Dorsolateral prefrontal cortex (tissue), 120 donors: ENCODE measurements at regions of chr3 and their contacts with region 1.

Region 1: GRCh38 chr3:40580494-40581091 is 55.8 kb downstream of the ZNF621 start:
- DNase-seq: peak; percentile 52 to 82 (median 71)
- H3K4me3 ChIP-seq: no peak overlapping the region
- H3K27ac ChIP-seq: peak overlapping the region in 43 of 59 donors; percentile 10 to 84 (median 62)
- H3K27me3 ChIP-seq: no peaks in the 10 kb centered on the region
- CTCF ChIP-seq: peak; percentile 86 to 98 (median 95)

Region 2: GRCh38 chr3:40333416-40333815 is 247.2 kb before region 1 on chr3:
- intact Hi-C with region 1: loop called in 1 of 2 experiments (anchors 5 kb)
- DNase-seq: no peak
- H3K4me3 ChIP-seq: no peak overlapping the region
- H3K27ac ChIP-seq: no peak overlapping the region
- H3K27me3 ChIP-seq: no peaks in the 10 kb centered on the region
- CTCF ChIP-seq: no peak

Region 3: DNA sequence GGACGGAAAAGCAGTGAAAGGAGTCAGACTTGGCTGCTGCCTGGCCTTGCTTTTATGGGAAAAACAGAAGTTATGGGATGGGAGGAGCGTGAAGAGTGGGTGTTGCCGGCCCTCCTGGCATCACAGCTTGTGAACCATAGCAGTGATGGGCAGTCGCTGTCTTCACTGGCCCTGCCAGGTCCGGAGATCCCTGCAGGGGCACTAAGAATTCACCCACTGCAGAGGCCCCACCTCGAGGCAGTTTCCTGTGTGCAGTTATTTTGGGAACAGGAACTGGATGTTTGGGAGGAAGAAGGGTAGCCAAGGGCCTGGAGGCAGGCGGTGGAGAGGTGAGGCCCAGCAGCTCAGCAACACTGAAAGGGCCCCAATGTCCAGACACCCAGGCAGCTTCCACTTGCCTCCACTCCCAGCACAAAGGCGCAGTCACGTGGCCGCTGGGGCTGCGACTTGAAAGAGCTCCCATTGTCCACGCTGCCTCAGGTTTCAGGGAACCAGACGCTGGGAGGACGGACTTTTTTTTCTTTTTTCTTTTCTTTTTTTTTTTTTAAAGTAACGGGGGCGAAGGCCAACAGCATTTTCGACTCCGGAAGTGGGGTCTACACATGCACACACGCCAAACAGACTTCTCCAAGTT is 199.8 kb after region 1 on chr3:
- intact Hi-C with region 1: loop called in 1 of 2 experiments (anchors 2 kb)
- DNase-seq: peak; percentile 74 to 93 (median 87)
- H3K4me3 ChIP-seq: peak overlapping the region; percentile 8 to 70 (median 43)
- H3K27ac ChIP-seq: peak overlapping the region in 58 of 59 donors; percentile 0 to 88 (median 76)
- H3K27me3 ChIP-seq: no peaks in the 10 kb centered on the region
- CTCF ChIP-seq: peak in 30 of 56 donors; percentile 6 to 42 (median 22)

Region 4: GRCh38 chr3:41198950-41199865 is 618.6 kb after region 1 on chr3 and contains the start of gene CTNNB1:
- intact Hi-C with region 1: loop called (anchors 5 kb)
- DNase-seq: peak; percentile 84 to 93 (median 90)
- H3K4me3 ChIP-seq: peak within 1 kb of the TSS; percentile 62 to 98 (median 85)
- H3K27ac ChIP-seq: peak within 1 kb of the TSS; percentile 60 to 99 (median 93)
- H3K27me3 ChIP-seq: no peaks in the 10 kb centered on the region
- CTCF ChIP-seq: peak in 45 of 56 donors; percentile 7 to 63 (median 37)
- total RNA-seq, gene CTNNB1: 196 to 326 (median 252) TPM

Region 5: DNA sequence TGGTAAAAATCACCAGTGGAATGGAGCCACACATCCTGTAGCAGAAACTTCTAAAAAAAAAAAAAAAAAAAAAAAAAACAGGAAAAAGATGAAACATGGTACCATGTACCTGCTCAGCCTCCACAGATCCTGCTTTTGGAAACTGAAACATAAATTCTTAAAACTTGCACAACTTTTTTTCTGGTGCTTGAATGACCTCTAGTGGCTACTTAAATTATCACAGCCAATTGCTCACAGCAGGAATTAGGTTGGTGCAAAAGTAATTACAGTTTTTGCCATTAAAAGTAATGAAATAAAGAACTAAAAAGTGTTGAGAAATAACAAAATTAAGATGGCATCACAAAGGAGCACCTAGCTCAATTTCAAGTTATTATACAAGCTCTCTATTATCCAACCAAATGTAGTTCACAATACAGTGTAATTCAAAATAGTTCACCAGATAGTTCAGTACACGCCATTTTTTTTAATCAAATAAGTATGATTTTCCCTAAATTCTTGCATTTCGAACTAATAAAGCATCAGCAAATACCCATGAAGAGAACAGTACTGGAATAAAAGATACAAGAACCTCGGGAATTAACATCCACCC is 1300.7 kb after region 1 on chr3:
- intact Hi-C with region 1: loop called (anchors 2 to 5 kb)
- DNase-seq: no peak
- H3K4me3 ChIP-seq: no peak overlapping the region
- H3K27ac ChIP-seq: no peak overlapping the region
- H3K27me3 ChIP-seq: no peaks in the 10 kb centered on the region
- CTCF ChIP-seq: peak; percentile 61 to 89 (median 76)

Region 6: DNA sequence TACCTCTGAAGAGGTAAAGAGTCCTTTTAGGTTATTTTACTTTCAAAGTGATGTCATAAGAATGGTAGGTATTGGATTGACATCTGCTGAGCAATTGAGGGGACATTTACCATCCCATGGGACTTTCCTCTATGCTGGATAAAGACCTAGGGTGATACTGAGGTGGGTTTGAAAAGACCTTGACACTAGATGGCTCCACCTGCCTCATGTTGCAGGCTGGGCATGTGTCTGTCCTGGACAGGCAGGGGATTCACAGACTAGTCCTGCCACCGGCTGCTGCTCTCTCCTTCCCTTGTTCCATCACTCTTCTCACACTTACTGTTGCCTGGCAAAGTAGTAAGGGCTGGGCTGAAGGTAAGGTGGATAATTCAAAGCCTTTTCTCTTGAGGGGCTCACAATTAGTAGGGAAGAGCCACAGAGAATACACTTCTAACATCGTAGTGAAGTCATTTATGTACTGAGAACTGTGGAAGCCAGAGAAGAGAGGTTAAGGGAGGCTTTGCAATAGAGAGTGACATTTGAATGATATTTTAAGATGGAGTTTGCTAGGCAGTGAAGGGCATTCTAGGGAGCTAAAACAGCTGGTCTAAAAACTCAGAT is 1538.3 kb after region 1 on chr3:
- intact Hi-C with region 1: loop called in 1 of 2 experiments (anchors 10 kb)
- DNase-seq: peak in 4 of 10 donors; percentile 49 to 70 (median 57)
- H3K4me3 ChIP-seq: no peak overlapping the region
- H3K27ac ChIP-seq: peak overlapping the region in 13 of 59 donors; percentile 1 to 64 (median 27)
- H3K27me3 ChIP-seq: no peaks in the 10 kb centered on the region
- CTCF ChIP-seq: peak in 55 of 56 donors; percentile 22 to 78 (median 57)